SK-N-SH (cell line): ENCODE measurements at regions of chr11 and their contacts with region 1.

Region 1: DNA sequence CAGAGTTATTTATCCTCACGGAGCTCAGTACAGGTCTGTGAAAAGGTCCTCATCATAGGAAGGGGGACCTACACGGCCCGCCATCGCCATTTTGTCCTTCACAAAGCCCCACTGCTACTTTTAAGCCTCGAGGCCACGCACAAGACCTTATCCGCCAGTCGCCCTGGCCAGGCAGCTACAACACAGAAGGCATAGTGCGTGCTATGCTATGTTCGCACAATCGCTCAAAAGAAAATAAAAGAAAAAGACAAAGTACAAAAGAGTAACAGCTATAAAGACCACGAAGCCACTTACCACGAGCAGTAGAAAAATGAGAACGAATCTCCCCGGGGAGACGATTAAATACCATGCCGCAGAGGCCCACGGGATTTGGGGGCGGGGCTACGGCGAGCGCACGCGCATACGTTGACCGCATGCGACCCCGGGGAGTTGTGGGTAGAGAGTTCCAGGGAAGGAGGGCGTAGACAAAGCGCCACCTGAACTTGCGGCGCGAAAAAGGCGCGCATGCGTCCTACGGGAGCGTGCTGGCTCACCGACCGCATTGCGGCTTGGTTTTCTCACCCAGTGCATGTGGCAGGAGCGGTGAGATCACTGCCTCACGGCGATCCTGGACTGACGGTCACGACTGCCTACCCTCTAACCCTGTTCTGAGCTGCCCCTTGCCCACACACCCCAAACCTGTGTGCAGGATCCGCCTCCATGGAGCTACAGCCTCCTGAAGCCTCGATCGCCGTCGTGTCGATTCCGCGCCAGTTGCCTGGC is 16.4 kb upstream of the WDR74 start:
- DNase-seq: peak; percentile 93
- H3K4me3 ChIP-seq: peak overlapping the region; percentile 90 to 94
- H3K27ac ChIP-seq: peak overlapping the region; percentile 61 to 93
- H3K4me1 ChIP-seq: peaks cover 14 to 16% of the 10 kb centered on the region in 2 experiments; a peak in 3 of 4 replicates
- H3K27me3 ChIP-seq: no peaks in the 10 kb centered on the region
- CTCF ChIP-seq: no peak
- EP300 ChIP-seq: no peak
- RAD21 ChIP-seq: no peak

Region 2: DNA sequence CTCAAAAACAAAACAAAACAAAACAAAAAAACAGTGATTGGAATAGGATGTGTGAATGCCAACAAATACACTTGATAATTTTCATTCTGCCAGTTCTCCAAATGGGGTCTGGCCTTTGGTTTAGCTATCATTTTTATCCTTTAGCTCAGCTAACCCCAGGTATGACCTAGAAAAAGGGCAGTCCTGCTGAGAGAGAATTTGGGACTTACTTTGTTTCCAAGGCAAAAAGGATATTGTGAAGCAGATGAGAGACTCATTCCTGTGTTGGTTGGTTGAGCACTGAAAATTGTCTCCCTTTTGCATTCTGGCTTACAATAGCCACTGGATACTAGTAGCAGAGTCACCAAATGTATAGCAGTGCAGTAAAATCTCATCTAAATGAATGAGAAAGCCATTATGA is 118.6 kb before region 1 on chr11:
- CTCF ChIA-PET with region 1: no interaction called
- POLR2A ChIA-PET with region 1: no interaction called
- DNase-seq: no peak
- H3K4me3 ChIP-seq: no peak overlapping the region
- H3K27ac ChIP-seq: no peak overlapping the region
- H3K4me1 ChIP-seq: no peaks in the 10 kb centered on the region
- H3K27me3 ChIP-seq: no peaks in the 10 kb centered on the region
- CTCF ChIP-seq: no peak
- EP300 ChIP-seq: no peak
- RAD21 ChIP-seq: no peak

Region 3: DNA sequence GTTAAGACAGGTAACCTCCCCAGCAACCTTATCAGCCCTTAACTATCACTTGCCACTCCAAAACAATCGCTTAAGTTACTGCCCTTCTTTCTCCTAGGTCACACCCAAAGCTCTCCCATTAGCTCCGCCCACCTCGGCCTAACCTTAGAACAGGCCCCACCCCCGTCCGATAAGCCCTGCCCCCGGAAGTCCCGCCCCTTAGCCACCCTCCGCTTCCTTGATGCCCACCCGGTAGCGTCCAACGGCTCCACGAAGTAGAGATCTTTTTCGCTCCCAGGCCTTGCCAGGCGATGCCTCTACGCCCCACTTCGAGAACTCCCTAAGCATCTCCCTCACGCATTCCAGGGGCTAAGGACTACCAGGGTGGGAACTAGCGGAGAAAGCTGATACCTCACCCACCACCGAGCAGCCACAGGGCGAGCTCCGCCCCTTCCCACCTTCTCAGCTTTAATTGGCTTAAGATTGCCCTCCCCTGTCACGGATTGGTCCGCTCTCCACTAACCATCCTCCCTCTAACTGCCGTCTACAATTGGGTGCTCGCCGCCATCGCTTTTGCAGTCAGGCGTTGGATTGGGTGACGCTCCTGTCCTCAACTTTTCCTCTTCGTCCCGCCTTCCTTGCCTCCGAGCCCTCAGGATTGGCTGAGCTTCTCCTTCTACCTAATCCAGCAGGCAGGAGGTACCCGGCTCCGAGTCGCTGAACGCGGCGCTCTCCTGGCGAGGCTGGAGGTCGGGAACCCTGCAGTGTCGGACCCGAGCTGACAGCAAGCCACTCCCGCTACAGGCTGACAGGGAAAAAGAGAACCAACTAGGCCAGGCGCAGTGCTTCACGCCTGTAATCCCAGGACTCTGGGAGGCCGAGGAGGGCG is 101.8 kb before region 1 on chr11 and contains the start of gene ZBTB3:
- CTCF ChIA-PET with region 1: no interaction called
- POLR2A ChIA-PET with region 1: interaction called, 15 read pairs
- DNase-seq: peak; percentile 90
- H3K4me3 ChIP-seq: peak within 1 kb of the TSS; percentile 66 to 69
- H3K27ac ChIP-seq: peak within 1 kb of the TSS; percentile 85 to 95
- H3K4me1 ChIP-seq: peaks cover 6 to 11% of the 10 kb centered on the region in 2 experiments; a peak in 3 of 4 replicates
- H3K27me3 ChIP-seq: no peaks in the 10 kb centered on the region
- CTCF ChIP-seq: no peak
- EP300 ChIP-seq: no peak
- RAD21 ChIP-seq: no peak
- polyA plus RNA-seq, gene ZBTB3: 2.1 and 3.3 TPM in 2 replicates

Region 4: DNA sequence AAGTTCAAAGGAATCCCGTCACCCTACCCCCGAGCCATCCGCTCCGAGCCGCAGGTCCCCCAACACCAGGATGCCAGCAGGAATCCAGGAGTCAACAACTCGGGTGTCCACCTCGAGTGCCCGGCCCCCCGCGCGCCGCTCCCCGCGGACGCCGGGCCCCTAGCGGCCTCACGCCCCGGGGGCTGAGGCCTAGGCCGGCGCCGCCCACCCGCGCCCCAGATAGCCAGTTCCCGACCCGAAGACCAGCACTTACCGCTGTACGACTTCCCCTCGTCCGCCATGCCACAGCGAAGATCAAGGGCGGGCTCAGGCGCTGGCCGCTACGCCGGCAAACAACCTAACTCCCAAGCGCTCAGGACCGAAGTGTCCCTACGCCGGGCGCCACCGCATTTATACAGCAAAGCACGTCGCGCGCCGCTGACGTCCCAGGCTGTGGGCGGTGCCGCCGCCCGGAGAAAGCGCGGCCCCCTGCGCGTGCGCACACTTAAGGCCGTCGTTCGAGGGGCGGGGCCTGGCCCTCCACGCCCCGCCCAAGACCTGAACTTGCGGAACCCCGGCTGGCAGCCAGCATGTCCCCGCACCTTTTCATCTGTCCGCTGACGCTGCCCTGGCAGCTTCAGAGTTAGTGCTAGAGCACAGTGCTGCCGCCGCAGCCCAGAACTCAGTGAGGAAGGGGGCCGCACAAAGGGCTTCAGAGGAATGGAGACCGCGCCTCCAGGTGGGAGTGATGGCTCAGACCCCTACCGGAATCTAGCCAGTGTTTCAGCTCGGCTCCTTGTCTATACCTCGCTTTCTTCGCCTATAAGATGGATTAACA is 50.5 kb before region 1 on chr11 and contains the start of gene NXF1:
- CTCF ChIA-PET with region 1: no interaction called
- POLR2A ChIA-PET with region 1: interaction called, 17 read pairs
- DNase-seq: peak; percentile 99
- H3K4me3 ChIP-seq: peak within 1 kb of the TSS; percentile 91 to 94
- H3K27ac ChIP-seq: peak within 1 kb of the TSS; percentile 75 to 83
- H3K4me1 ChIP-seq: peaks cover 8 to 18% of the 10 kb centered on the region in 2 experiments
- H3K27me3 ChIP-seq: no peaks in the 10 kb centered on the region
- CTCF ChIP-seq: 0 out of 2 replicates have a peak, but pooled peaks have one; percentile 14
- EP300 ChIP-seq: no peak
- RAD21 ChIP-seq: no peak
- polyA plus RNA-seq, gene NXF1: 47.6 and 59.7 TPM in 2 replicates

Region 5: DNA sequence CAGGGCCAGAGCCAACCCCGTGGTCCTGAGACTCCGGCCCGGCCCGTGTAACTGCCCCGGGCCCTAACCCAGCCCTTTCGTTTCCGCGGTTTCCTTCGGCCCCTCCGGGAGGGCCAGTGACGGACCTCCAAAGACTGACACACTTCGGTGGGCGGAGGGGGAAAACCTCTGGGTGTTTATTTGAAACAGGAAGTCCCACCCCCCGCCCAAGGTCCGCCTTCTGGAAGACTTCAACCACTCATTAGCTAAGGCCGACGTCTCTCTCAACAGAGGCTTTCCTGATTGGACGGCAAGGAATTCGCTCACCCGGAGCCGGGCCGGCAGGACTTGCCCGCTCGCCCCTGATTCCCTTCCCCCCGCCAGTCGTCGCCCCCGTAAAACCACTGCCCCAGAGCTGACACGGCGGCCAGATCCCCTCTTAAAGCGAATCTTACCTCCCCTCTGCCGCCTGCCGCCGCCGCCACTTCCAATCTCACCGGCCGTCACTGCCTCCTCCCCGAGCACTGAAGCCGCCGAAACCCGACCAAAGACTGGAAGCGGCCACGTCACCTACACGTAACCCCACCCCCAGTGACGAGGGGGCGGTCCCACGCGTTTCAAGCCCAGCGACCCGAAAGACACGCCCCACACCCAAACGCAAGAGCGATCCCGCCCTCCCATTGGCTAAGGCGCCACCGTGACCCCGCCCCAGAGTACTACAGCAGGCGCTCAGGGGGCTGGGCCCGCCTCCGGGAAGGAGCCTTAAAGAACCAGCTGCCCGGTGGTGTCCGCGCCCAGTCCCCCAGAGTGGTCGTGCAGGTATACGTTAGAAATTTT is 24.0 kb before region 1 on chr11 and contains the start of gene STX5:
- CTCF ChIA-PET with region 1: no interaction called
- POLR2A ChIA-PET with region 1: interaction called, 15 read pairs
- DNase-seq: peak; percentile 96
- H3K4me3 ChIP-seq: peak within 1 kb of the TSS; percentile 76 to 99
- H3K27ac ChIP-seq: peak within 1 kb of the TSS; percentile 89 to 93
- H3K4me1 ChIP-seq: peaks cover 0 to 20% of the 10 kb centered on the region in 2 experiments; a peak in 3 of 4 replicates
- H3K27me3 ChIP-seq: no peaks in the 10 kb centered on the region
- CTCF ChIP-seq: no peak
- EP300 ChIP-seq: no peak
- RAD21 ChIP-seq: no peak
- polyA plus RNA-seq, gene STX5: 24.2 and 27.4 TPM in 2 replicates

Region 6: DNA sequence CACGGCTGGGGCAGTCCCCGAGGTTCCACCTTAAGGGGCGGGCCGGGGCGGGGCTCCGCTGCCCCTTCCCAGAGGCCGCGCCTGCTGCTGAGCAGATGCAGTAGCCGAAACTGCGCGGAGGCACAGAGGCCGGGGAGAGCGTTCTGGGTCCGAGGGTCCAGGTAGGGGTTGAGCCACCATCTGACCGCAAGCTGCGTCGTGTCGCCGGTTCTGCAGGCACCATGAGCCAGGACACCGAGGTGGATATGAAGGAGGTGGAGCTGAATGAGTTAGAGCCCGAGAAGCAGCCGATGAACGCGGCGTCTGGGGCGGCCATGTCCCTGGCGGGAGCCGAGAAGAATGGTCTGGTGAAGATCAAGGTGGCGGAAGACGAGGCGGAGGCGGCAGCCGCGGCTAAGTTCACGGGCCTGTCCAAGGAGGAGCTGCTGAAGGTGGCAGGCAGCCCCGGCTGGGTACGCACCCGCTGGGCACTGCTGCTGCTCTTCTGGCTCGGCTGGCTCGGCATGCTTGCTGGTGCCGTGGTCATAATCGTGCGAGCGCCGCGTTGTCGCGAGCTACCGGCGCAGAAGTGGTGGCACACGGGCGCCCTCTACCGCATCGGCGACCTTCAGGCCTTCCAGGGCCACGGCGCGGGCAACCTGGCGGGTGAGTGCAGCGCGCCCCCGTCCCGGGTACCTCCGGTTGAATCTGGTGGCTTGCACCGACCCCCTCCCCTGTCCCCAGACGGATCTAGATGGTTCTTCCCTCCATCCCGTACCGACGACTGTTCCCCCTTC is 25.2 kb after region 1 on chr11 and contains the start of gene SLC3A2:
- CTCF ChIA-PET with region 1: interaction called, 13 read pairs
- POLR2A ChIA-PET with region 1: interaction called, 25 read pairs
- DNase-seq: peak; percentile 89
- H3K4me3 ChIP-seq: peak within 1 kb of the TSS; percentile 82 to 91
- H3K27ac ChIP-seq: peak within 1 kb of the TSS; percentile 94 to 98
- H3K4me1 ChIP-seq: peaks cover 32 to 44% of the 10 kb centered on the region in 2 experiments
- H3K27me3 ChIP-seq: no peaks in the 10 kb centered on the region
- CTCF ChIP-seq: peak; percentile 67
- EP300 ChIP-seq: no peak
- RAD21 ChIP-seq: peak; percentile 57
- polyA plus RNA-seq, gene SLC3A2: 212 and 308 TPM in 2 replicates